Gastrocnemius medialis (tissue), 4 donors: ENCODE measurements at regions of chr1 and their contacts with region 1.

Region 1: DNA sequence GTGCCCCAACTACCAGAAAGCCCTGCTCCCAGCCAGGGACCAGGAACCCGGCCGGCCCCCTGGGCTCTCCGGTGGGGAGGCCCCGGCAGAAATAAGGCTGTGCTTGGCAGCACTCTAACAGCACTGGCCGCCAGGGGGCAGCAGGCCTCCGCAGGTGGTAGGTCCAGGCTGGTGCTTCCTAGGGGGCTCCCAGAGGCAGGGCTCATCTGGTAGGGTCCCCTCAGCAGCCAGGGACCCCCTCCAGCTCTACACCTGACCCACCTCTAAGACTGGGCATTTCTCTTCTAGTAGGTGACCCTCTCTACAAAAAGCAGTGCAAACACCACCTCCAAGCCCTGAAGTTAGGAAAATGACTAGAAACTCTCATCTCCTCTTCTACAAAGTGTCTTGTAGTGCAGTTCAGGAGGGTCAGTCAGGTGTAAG is 85.6 kb downstream of the STUM start:
- DNase-seq: peak; percentile 56 to 75
- ATAC-seq: peak; percentile 64 to 75
- H3K4me3 ChIP-seq: no peak overlapping the region
- H3K27ac ChIP-seq: peak overlapping the region; percentile 46 to 71 (median 66)
- H3K4me1 ChIP-seq: peaks cover 33 to 41% of the 10 kb centered on the region in 2 donors
- H3K27me3 ChIP-seq: no peaks in the 10 kb centered on the region
- CTCF ChIP-seq: peak; percentile 90 to 98 (median 98)
- POLR2A ChIP-seq: no peak

Region 2: GRCh38 chr1:226519716-226520598 is 114.2 kb before region 1 on chr1:
- in situ Hi-C with region 1: no loop called
- intact Hi-C with region 1: no loop called
- DNase-seq: no peak
- ATAC-seq: peak in 1 of 2 donors; percentile 32
- H3K4me3 ChIP-seq: no peak overlapping the region
- H3K27ac ChIP-seq: peak overlapping the region in 1 of 4 donors; percentile 33
- H3K4me1 ChIP-seq: peaks cover 0 to 31% of the 10 kb centered on the region in 2 donors
- H3K27me3 ChIP-seq: no peaks in the 10 kb centered on the region
- CTCF ChIP-seq: peak in 2 of 5 experiments; percentile 18 to 19
- POLR2A ChIP-seq: no peak

Region 3: DNA sequence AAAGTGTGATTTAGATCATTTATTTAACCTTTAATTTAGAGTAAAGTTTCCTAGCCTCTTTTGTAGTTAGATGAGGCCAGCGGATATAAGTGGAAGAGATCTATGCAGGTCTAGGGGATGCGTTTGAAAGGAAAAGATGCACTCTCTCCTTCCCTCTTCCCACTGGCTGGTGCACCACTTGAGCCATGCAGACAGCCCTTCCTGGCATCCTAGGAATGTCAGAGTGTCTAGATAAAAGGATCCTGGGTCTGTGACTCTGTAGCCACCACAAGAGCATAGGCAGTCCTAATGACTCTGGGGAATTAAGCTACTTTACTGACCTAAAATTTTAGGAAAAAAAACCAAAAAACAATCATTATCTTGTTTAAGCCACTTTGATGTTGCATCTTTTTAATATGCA is 101.6 kb before region 1 on chr1:
- in situ Hi-C with region 1: no loop called
- intact Hi-C with region 1: no loop called
- DNase-seq: no peak
- ATAC-seq: no peak
- H3K4me3 ChIP-seq: no peak overlapping the region
- H3K27ac ChIP-seq: no peak overlapping the region
- H3K4me1 ChIP-seq: peaks cover 16 to 18% of the 10 kb centered on the region in 2 donors
- H3K27me3 ChIP-seq: no peaks in the 10 kb centered on the region
- CTCF ChIP-seq: no peak
- POLR2A ChIP-seq: no peak

Region 4: DNA sequence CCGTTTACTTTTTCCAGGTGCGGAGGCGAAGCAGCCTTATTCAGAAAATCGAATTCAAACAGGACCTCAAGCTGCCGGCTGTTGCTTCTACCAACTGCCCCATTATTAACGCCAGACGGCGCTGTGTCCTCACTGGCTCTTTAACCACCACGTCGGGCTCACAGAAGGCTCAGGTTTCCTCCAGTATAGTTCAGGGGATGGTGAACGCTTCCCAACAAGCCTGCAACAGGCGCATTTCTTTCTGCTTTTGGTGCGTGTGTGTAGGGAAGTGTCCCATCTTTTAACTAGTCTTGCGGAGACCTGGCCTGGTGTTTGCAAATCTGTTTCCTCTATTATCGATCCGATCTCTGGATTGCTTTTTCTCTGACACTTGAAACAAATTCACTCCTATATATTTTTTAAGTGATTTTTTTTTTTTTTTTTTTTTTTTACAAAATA is 86.4 kb before region 1 on chr1:
- in situ Hi-C with region 1: no loop called
- intact Hi-C with region 1: loop called (anchors 2 kb)
- DNase-seq: peak; percentile 78 to 82
- ATAC-seq: peak; percentile 78 to 85
- H3K4me3 ChIP-seq: peak overlapping the region in 2 of 4 donors; percentile 50 to 57
- H3K27ac ChIP-seq: peak overlapping the region in 3 of 4 donors; percentile 13 to 61 (median 47)
- H3K4me1 ChIP-seq: peaks cover 17 to 21% of the 10 kb centered on the region in 2 donors
- H3K27me3 ChIP-seq: peaks cover 9 to 20% (median 10%) of the 10 kb centered on the region in 3 donors
- CTCF ChIP-seq: peak; percentile 68 to 90 (median 78)
- POLR2A ChIP-seq: peak in 1 of 2 donors; percentile 20

Region 5: GRCh38 chr1:226687426-226687825 is 53.2 kb after region 1 on chr1:
- in situ Hi-C with region 1: loop called in 1 of 4 experiments (anchors 5 kb)
- intact Hi-C with region 1: loop called (anchors 1 kb)
- DNase-seq: no peak
- ATAC-seq: peak; percentile 32 to 45
- H3K4me3 ChIP-seq: no peak overlapping the region
- H3K27ac ChIP-seq: peak overlapping the region; percentile 65 to 89 (median 70)
- H3K4me1 ChIP-seq: peaks cover 73 to 95% of the 10 kb centered on the region in 2 donors
- H3K27me3 ChIP-seq: no peaks in the 10 kb centered on the region
- CTCF ChIP-seq: peak in 4 of 5 experiments; percentile 23 to 53 (median 52)
- POLR2A ChIP-seq: no peak

Region 6: GRCh38 chr1:226778657-226779058 is 144.5 kb after region 1 on chr1:
- in situ Hi-C with region 1: no loop called
- intact Hi-C with region 1: no loop called
- DNase-seq: no peak
- ATAC-seq: peak in 1 of 2 donors; percentile 52
- H3K4me3 ChIP-seq: no peak overlapping the region
- H3K27ac ChIP-seq: no peak overlapping the region
- H3K4me1 ChIP-seq: no peaks in the 10 kb centered on the region
- H3K27me3 ChIP-seq: no peaks in the 10 kb centered on the region
- CTCF ChIP-seq: no peak
- POLR2A ChIP-seq: no peak

Region 7: DNA sequence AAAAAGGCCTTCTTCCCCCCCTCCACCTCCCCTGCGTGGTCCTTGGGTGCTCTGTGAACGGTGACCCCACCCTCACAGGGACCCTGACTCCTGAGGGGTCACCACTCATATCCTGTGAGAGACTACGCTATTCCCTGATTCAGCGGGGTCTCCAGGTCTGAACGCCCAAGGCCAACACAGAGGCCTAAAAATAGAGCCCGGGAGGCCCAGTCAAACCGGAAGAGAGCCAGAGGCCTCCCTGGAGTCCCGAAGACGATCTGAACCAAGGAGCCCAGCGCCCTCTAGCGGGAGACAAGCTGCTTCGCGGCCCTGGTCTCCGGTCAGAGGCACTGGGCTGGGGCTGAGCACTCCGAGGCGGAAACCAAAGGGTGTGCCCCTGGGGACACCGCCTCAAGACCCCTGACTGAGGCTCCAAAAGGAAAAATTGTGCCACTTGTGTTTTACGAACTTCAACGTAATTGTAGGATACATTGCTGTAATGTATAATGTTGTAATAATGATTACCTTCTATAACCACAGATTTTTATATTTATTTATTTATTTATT is 193.9 kb after region 1 on chr1:
- in situ Hi-C with region 1: loop called (anchors 5 kb)
- intact Hi-C with region 1: loop called (anchors 1 kb)
- DNase-seq: peak; percentile 92 to 94
- ATAC-seq: peak; percentile 95 to 98
- H3K4me3 ChIP-seq: peak overlapping the region; percentile 16 to 50 (median 34)
- H3K27ac ChIP-seq: peak overlapping the region; percentile 69 to 87 (median 77)
- H3K4me1 ChIP-seq: peaks cover 11 to 14% of the 10 kb centered on the region in 2 donors
- H3K27me3 ChIP-seq: no peaks in the 10 kb centered on the region
- CTCF ChIP-seq: peak; percentile 93 to 98 (median 96)
- POLR2A ChIP-seq: no peak

Region 8: GRCh38 chr1:227174164-227174563 is 540.0 kb after region 1 on chr1:
- in situ Hi-C with region 1: no loop called
- intact Hi-C with region 1: no loop called
- DNase-seq: no peak
- ATAC-seq: no peak
- H3K4me3 ChIP-seq: no peak overlapping the region
- H3K27ac ChIP-seq: no peak overlapping the region
- H3K4me1 ChIP-seq: peaks cover 0 to 14% of the 10 kb centered on the region in 2 donors
- H3K27me3 ChIP-seq: no peaks in the 10 kb centered on the region
- CTCF ChIP-seq: no peak
- POLR2A ChIP-seq: no peak